ENCODE measurements at regions of chr19 and their contacts with region 1.

Region 1: DNA sequence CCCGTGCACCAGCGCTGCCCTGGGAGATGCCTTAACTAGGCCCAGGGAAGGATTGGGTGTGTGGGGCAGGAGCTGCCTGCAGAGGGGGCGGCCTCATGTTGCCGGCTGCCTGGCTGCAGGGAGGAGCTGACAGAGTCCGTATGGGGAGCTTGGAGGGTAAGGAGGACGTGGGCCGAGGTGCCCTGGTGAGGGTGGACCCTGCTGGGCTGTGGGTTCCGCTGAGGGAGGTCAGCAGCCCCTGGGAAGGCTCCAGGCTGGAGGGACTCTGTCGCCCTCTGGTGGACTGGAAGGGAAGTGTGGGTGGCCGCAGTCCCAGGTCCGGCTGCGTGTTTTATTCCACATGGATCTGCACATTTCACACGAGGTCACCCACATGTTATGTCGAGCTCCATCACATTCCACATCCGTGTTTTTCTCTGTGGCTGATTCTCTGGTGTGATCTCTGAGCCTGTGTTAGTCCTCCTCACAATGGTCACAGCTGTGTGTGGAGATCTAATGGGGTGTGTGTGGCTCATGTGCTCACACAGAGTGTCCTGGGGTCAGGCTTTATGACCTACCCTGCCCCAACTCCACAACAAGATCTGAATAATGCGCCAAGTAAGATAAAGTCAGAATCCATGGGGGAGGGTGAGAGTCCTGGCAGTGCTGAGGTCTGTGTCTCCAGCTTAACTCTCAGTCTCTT is 1.8 kb upstream of the CEACAM8 start:
- DNase-seq: peak; percentile 12
- H3K4me3 ChIP-seq: no peak overlapping the region
- H3K27ac ChIP-seq: no peak overlapping the region
- H3K4me1 ChIP-seq: no peaks in the 10 kb centered on the region
- H3K27me3 ChIP-seq: no peaks in the 10 kb centered on the region
- CTCF ChIP-seq: peak; percentile 76 to 91
- POLR2A ChIP-seq: no peak

Region 2: GRCh38 chr19:42563352-42564210 is 33.0 kb before region 1 on chr19:
- CTCF ChIA-PET with region 1: interaction called, 3 read pairs
- POLR2A ChIA-PET with region 1: no interaction called
- dilution Hi-C with region 1: no loop called
- intact Hi-C with region 1: loop called (anchors 2 kb)
- DNase-seq: peak; percentile 38
- H3K4me3 ChIP-seq: no peak overlapping the region
- H3K27ac ChIP-seq: no peak overlapping the region
- H3K4me1 ChIP-seq: no peaks in the 10 kb centered on the region
- H3K27me3 ChIP-seq: no peaks in the 10 kb centered on the region
- CTCF ChIP-seq: peak; percentile 35 to 58
- POLR2A ChIP-seq: no peak

Region 3: GRCh38 chr19:42634409-42635232 is 38.1 kb after region 1 on chr19:
- CTCF ChIA-PET with region 1: no interaction called
- POLR2A ChIA-PET with region 1: no interaction called
- dilution Hi-C with region 1: no loop called
- intact Hi-C with region 1: no loop called
- DNase-seq: peak; percentile 2
- H3K4me3 ChIP-seq: no peak overlapping the region
- H3K27ac ChIP-seq: no peak overlapping the region
- H3K4me1 ChIP-seq: no peaks in the 10 kb centered on the region
- H3K27me3 ChIP-seq: no peaks in the 10 kb centered on the region
- CTCF ChIP-seq: peak; percentile 43 to 49
- POLR2A ChIP-seq: no peak